ENCODE measurements at regions of chr5 and their contacts with region 1.

Region 1: GRCh38 chr5:7927466-7928375 is 58.8 kb downstream of the MTRR start:
- DNase-seq: no peak
- ATAC-seq: peak; percentile 64
- H3K4me3 Mint-ChIP-seq: no peak overlapping the region
- H3K27ac Mint-ChIP-seq: no peak overlapping the region
- H3K4me1 Mint-ChIP-seq: peaks cover 2% of the 10 kb centered on the region
- H3K27me3 Mint-ChIP-seq: peaks cover 2% of the 10 kb centered on the region
- CTCF ChIP-seq: peak; percentile 61

Region 2: GRCh38 chr5:7886849-7887475 is 40.8 kb before region 1 on chr5:
- CTCF ChIA-PET with region 1: interaction called, 3 read pairs
- POLR2A ChIA-PET with region 1: no interaction called
- intact Hi-C with region 1: loop called (anchors 1 kb)
- DNase-seq: no peak
- ATAC-seq: no peak
- H3K4me3 Mint-ChIP-seq: no peak overlapping the region
- H3K27ac Mint-ChIP-seq: no peak overlapping the region
- H3K4me1 Mint-ChIP-seq: peaks cover 3% of the 10 kb centered on the region
- H3K27me3 Mint-ChIP-seq: no peaks in the 10 kb centered on the region
- CTCF ChIP-seq: no peak

Region 3: DNA sequence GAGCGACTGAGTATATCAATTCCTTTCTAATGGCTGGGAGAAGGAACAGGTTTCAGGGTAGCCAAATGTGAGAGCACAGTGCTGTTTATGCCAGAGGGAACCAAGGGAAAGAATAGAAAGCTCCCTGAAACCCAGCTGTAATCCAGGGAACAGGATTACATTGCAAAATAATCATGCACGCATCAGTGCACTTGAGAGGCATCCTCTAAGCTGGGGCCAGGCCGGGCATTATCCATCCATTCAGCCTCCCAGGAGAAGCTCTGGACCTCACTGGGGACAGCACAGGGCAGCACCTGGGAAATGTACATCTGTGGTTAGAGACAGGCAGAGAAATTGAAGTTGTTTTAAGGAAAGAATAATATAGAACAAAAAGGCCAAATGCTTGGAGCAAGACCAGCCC is 14.0 kb after region 1 on chr5:
- CTCF ChIA-PET with region 1: interaction called, 24 read pairs
- POLR2A ChIA-PET with region 1: no interaction called
- intact Hi-C with region 1: no loop called
- DNase-seq: no peak
- ATAC-seq: no peak
- H3K4me3 Mint-ChIP-seq: no peak overlapping the region
- H3K27ac Mint-ChIP-seq: no peak overlapping the region
- H3K4me1 Mint-ChIP-seq: peaks cover 1% of the 10 kb centered on the region
- H3K27me3 Mint-ChIP-seq: peaks cover 10% of the 10 kb centered on the region
- CTCF ChIP-seq: no peak

Region 4: GRCh38 chr5:8184455-8185063 is 256.8 kb after region 1 on chr5:
- CTCF ChIA-PET with region 1: interaction called, 4 read pairs
- POLR2A ChIA-PET with region 1: no interaction called
- intact Hi-C with region 1: loop called (anchors 1 kb)
- DNase-seq: peak; percentile 23
- ATAC-seq: peak; percentile 64
- H3K4me3 Mint-ChIP-seq: no peak overlapping the region
- H3K27ac Mint-ChIP-seq: no peak overlapping the region
- H3K4me1 Mint-ChIP-seq: no peaks in the 10 kb centered on the region
- H3K27me3 Mint-ChIP-seq: no peaks in the 10 kb centered on the region
- CTCF ChIP-seq: peak; percentile 93

Region 5: GRCh38 chr5:9207817-9208418 is 1280.2 kb after region 1 on chr5:
- CTCF ChIA-PET with region 1: interaction called, 5 read pairs
- POLR2A ChIA-PET with region 1: no interaction called
- intact Hi-C with region 1: loop called (anchors 1 kb)
- DNase-seq: no peak
- ATAC-seq: no peak
- H3K4me3 Mint-ChIP-seq: no peak overlapping the region
- H3K27ac Mint-ChIP-seq: no peak overlapping the region
- H3K4me1 Mint-ChIP-seq: no peaks in the 10 kb centered on the region
- H3K27me3 Mint-ChIP-seq: no peaks in the 10 kb centered on the region
- CTCF ChIP-seq: no peak